ENCODE measurements at regions of chr19 and their contacts with region 1.

Region 1: GRCh38 chr19:55703790-55704215 is 28.8 kb downstream of the EPN1 start:
- DNase-seq: peak; percentile 76
- ATAC-seq: peak; percentile 78
- H3K4me3 Mint-ChIP-seq: no peak overlapping the region
- H3K27ac Mint-ChIP-seq: no peak overlapping the region
- H3K4me1 Mint-ChIP-seq: no peaks in the 10 kb centered on the region
- H3K27me3 Mint-ChIP-seq: no peaks in the 10 kb centered on the region

Region 2: GRCh38 chr19:55809381-55810058 is 105.7 kb after region 1 on chr19:
- CTCF ChIA-PET with region 1: interaction called, 4 read pairs
- POLR2A ChIA-PET with region 1: no interaction called
- intact Hi-C with region 1: loop called in 1 of 2 experiments (anchors 5 kb)
- DNase-seq: peak; percentile 71
- ATAC-seq: peak; percentile 97
- H3K4me3 Mint-ChIP-seq: no peak overlapping the region
- H3K27ac Mint-ChIP-seq: no peak overlapping the region
- H3K4me1 Mint-ChIP-seq: peaks cover 4% of the 10 kb centered on the region
- H3K27me3 Mint-ChIP-seq: peaks cover 15% of the 10 kb centered on the region

Measured in activated CD4-positive, alpha-beta T cell treated with anti-CD3 and anti-CD28 coated beads for 36 hours (primary cell).